GM12878 (cell line): ENCODE measurements at regions of chr10 and their contacts with region 1.

Region 1: GRCh38 chr10:88386821-88387773 is 196.0 kb downstream of the RNLS start:
- DNase-seq: peak; percentile 80
- ATAC-seq: peak; percentile 82
- H3K4me3 ChIP-seq: peak overlapping the region; percentile 48
- H3K27ac ChIP-seq: peak overlapping the region; percentile 99
- H3K4me1 ChIP-seq: peaks cover 63% of the 10 kb centered on the region
- H3K27me3 ChIP-seq: no peaks in the 10 kb centered on the region
- CTCF ChIP-seq: no peak
- EP300 ChIP-seq: 0 out of 4 replicates have a peak, but pooled peaks of 1 of the 2 experiments have one; percentile 37
- POLR2A ChIP-seq: no peak; the same call in none of the 2 replicates
- RAD21 ChIP-seq: no peak

Region 2: DNA sequence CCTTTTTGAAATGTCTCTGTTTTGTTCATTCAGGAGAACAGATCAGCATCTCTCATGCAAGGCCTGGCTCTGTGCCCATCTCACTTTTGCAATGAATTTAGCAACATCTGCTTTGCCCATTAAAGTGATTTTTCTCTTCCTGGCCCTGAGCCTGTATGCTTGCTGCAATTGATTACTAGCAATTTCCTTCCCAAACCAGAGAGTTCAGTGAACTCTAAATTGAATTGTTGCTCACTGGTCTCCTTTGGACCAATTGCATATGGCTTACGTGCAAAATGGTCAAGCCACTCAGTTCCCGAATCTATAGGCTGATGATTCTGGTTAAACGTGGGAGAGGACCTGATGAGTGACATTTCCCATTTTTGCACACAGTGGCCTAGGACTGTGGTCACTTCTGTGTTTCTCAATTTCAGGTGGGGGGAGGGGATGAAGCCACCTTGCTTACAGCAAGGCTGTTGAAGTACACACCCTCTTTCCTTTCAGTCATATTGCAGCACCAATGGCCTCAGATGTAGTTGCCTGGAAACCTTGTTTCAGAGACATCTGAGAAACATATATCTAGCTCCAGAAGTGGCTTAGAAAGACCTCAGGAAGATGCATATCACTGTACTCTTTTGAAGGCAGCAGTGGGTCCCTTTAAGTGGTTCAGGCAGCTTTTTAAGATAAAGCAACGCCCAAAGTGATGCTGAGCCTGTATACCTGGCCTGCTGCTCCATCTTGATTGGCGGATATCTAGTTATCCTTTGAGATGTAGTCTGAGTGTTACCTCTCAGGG is 322.3 kb before region 1 on chr10:
- CTCF ChIA-PET with region 1: interaction called, 12 read pairs
- POLR2A ChIA-PET with region 1: interaction called, 8 read pairs
- RAD21 ChIA-PET with region 1: interaction called, 23 read pairs
- SMC1A ChIA-PET with region 1: interaction called, 24 read pairs
- in situ Hi-C with region 1: no loop called
- intact Hi-C with region 1: loop called (anchors 2 kb)
- DNase-seq: peak; percentile 95
- ATAC-seq: peak; percentile 74
- H3K4me3 ChIP-seq: no peak overlapping the region; the same call in 1 of the 2 replicates
- H3K27ac ChIP-seq: peak overlapping the region; percentile 92
- H3K4me1 ChIP-seq: peaks cover 88% of the 10 kb centered on the region
- H3K27me3 ChIP-seq: no peaks in the 10 kb centered on the region
- CTCF ChIP-seq: no peak
- EP300 ChIP-seq: peak; percentile 90 to 93; a peak in 3 of 4 replicates
- POLR2A ChIP-seq: no peak
- RAD21 ChIP-seq: 0 out of 2 replicates have a peak, but pooled peaks have one; percentile 11

Region 3: DNA sequence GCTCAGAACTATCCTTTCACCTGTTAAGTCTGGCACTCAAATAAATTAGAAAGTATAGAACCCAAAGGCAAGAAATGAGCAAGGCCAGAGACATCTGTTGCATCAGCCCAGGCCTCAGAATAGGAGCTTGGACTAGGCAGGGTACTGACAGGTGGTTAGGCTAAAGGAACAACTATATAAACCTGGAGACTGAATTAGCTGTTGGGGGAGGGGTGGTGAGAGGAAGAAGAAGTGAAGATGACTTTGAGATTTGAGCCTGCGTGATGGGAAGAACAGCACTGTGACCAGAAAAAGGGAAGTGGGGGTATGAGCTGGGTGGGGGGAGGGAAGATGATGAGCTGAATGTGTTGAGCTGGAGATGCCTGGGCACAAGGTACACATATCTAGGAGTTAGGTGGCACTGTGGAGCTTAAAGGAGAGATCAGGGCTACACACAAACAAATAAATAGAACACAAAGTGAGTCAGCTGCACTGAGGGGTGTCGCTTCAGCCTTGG is 278.9 kb before region 1 on chr10:
- CTCF ChIA-PET with region 1: interaction called, 51 read pairs
- POLR2A ChIA-PET with region 1: interaction called, 5 read pairs
- RAD21 ChIA-PET with region 1: interaction called, 102 read pairs
- SMC1A ChIA-PET with region 1: interaction called, 192 read pairs
- in situ Hi-C with region 1: no loop called
- intact Hi-C with region 1: loop called (anchors 2 kb)
- DNase-seq: peak; percentile 94
- ATAC-seq: peak; percentile 56
- H3K4me3 ChIP-seq: no peak overlapping the region
- H3K27ac ChIP-seq: peak overlapping the region; percentile 92
- H3K4me1 ChIP-seq: peaks cover 92% of the 10 kb centered on the region
- H3K27me3 ChIP-seq: no peaks in the 10 kb centered on the region
- CTCF ChIP-seq: peak; percentile 39 to 46 (median 45); a peak in 5 of 6 replicates
- EP300 ChIP-seq: peak; percentile 69 to 76; a peak in 2 of 4 replicates
- POLR2A ChIP-seq: no peak
- RAD21 ChIP-seq: peak; percentile 41; the same call in 1 of the 2 replicates

Region 4: GRCh38 chr10:88181902-88182600 is 205.0 kb before region 1 on chr10:
- CTCF ChIA-PET with region 1: interaction called, 4 read pairs
- POLR2A ChIA-PET with region 1: no interaction called
- RAD21 ChIA-PET with region 1: interaction called, 4 read pairs
- SMC1A ChIA-PET with region 1: interaction called, 11 read pairs
- in situ Hi-C with region 1: no loop called
- intact Hi-C with region 1: no loop called
- DNase-seq: no peak
- ATAC-seq: peak; percentile 57
- H3K4me3 ChIP-seq: no peak overlapping the region
- H3K27ac ChIP-seq: no peak overlapping the region
- H3K4me1 ChIP-seq: no peaks in the 10 kb centered on the region
- H3K27me3 ChIP-seq: no peaks in the 10 kb centered on the region
- CTCF ChIP-seq: no peak
- EP300 ChIP-seq: no peak
- POLR2A ChIP-seq: no peak
- RAD21 ChIP-seq: no peak

Region 5: DNA sequence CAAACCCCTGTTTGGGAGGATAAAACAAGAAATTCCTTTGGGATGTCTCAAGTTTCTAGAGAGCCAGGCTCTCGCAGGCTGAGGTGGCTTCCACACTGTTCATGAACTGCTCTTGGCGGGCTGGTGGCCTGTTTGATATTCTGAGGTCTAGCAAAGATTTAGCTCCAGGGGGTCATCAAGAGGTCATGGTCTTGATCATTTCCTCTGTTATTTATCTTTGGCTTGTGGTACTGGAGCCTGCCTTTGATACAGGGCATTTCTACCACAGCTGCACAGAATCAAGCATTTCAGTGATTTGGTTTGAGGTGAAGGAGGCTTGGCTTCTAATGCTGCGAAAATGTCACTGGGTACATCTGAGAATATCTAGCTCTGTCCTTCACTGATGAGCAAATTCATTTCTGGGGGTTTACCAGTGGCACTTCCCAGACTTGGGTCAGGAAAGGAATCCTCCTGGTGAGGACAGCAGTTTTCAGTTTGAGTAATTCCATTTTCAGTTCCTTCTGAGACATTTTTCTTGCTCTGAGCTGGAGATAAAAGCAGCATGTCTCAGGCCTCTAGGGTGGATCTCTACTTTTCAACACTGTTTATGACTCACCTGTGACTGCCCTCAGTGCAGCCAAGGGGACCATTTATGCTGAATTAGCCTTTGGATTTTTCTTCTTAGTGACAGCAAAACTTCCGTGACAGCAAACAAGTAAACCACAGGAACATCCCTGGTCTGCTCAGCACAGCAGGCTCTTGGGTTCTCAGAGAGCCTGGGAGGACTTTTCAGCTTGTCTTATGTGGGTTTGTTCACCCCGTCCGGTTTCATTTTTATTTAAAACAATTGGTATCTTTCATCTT is 116.0 kb before region 1 on chr10:
- CTCF ChIA-PET with region 1: interaction called, 26 read pairs
- POLR2A ChIA-PET with region 1: interaction called, 17 read pairs
- RAD21 ChIA-PET with region 1: interaction called, 68 read pairs
- SMC1A ChIA-PET with region 1: interaction called, 42 read pairs
- in situ Hi-C with region 1: no loop called
- intact Hi-C with region 1: loop called (anchors 1 kb)
- DNase-seq: peak; percentile 97
- ATAC-seq: peak; percentile 95
- H3K4me3 ChIP-seq: no peak overlapping the region; the same call in 1 of the 2 replicates
- H3K27ac ChIP-seq: peak overlapping the region; percentile 96
- H3K4me1 ChIP-seq: peaks cover 48% of the 10 kb centered on the region
- H3K27me3 ChIP-seq: no peaks in the 10 kb centered on the region
- CTCF ChIP-seq: no peak
- EP300 ChIP-seq: peak; percentile 93 to 95
- POLR2A ChIP-seq: peak; percentile 7; the same call in 1 of the 2 replicates
- RAD21 ChIP-seq: peak; percentile 17; the same call in 1 of the 2 replicates

Region 6: GRCh38 chr10:88332503-88333247 is 54.4 kb before region 1 on chr10:
- CTCF ChIA-PET with region 1: interaction called, 16 read pairs
- POLR2A ChIA-PET with region 1: interaction called, 6 read pairs
- RAD21 ChIA-PET with region 1: interaction called, 82 read pairs
- SMC1A ChIA-PET with region 1: interaction called, 73 read pairs
- in situ Hi-C with region 1: no loop called
- intact Hi-C with region 1: no loop called
- DNase-seq: no peak
- ATAC-seq: peak; percentile 54
- H3K4me3 ChIP-seq: no peak overlapping the region
- H3K27ac ChIP-seq: no peak overlapping the region
- H3K4me1 ChIP-seq: peaks cover 6% of the 10 kb centered on the region; the same call in 1 of the 2 replicates
- H3K27me3 ChIP-seq: no peaks in the 10 kb centered on the region
- CTCF ChIP-seq: no peak
- EP300 ChIP-seq: no peak
- POLR2A ChIP-seq: no peak
- RAD21 ChIP-seq: no peak

Region 7: DNA sequence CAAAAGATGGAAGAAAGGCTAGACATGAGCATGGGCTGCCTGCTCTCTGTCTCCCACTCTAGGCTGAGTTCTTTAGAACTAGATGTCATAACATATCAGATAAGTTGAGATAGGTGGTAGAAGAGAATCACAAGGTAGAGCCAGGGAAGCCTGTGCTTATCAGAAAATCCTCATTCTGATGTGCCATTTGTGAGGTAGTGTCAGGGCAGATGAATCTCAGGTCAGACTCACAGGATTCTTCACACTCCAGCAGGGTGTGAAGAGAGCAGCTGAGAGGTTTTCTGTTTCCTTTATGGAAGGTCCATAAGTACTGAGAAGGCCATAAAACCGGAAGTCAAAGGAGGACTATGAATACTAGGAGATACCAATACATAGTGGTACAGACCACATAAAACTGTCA is 63.1 kb after region 1 on chr10:
- CTCF ChIA-PET with region 1: no interaction called
- POLR2A ChIA-PET with region 1: no interaction called
- RAD21 ChIA-PET with region 1: no interaction called
- SMC1A ChIA-PET with region 1: no interaction called
- in situ Hi-C with region 1: no loop called
- intact Hi-C with region 1: no loop called
- DNase-seq: no peak
- ATAC-seq: no peak
- H3K4me3 ChIP-seq: no peak overlapping the region
- H3K27ac ChIP-seq: no peak overlapping the region
- H3K4me1 ChIP-seq: no peaks in the 10 kb centered on the region
- H3K27me3 ChIP-seq: no peaks in the 10 kb centered on the region
- CTCF ChIP-seq: no peak
- EP300 ChIP-seq: no peak
- POLR2A ChIP-seq: no peak
- RAD21 ChIP-seq: no peak